MCF 10A (cell line): ENCODE measurements at regions of chr4 and their contacts with region 1.

Region 1: DNA sequence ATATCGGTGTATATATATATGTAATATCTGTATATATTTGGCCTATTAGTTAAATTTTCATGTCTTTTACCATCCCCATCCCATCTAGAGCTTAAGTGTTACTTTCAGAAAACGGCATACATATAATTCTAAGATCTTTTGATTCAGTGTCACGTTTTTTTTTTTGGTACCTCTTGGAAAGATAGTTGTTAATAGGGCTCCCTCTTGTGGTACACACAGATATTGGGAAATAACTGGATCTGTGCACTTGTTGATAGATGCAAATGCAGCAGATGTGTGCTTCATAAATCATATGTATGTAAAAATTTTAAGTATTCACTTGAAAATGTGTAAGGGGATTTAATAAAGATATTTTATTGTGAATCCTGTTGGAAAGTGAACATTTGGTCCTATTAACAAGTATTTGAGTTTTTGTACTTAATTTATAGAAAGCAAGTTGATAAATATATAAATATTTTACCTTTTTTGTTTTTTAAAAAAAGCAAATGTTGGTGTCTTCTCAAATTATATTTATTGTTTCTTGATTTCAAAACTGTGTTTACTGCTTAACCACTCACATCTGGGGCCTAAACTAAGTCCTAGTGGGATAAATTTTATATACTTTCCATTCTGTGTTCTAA is 74.7 kb downstream of the PAQR3 start:
- DNase-seq: peak; percentile 78
- H3K4me3 Mint-ChIP-seq: no peak overlapping the region
- H3K27ac Mint-ChIP-seq: no peak overlapping the region
- H3K4me1 Mint-ChIP-seq: peaks cover 6% of the 10 kb centered on the region
- H3K27me3 Mint-ChIP-seq: no peaks in the 10 kb centered on the region
- CTCF ChIP-seq: peak; percentile 61

Region 2: GRCh38 chr4:77959566-77960338 is 904.8 kb before region 1 on chr4:
- CTCF ChIA-PET with region 1: no interaction called
- POLR2A ChIA-PET with region 1: no interaction called
- intact Hi-C with region 1: loop called (anchors 10 kb)
- DNase-seq: peak; percentile 54
- H3K4me3 Mint-ChIP-seq: no peak overlapping the region
- H3K27ac Mint-ChIP-seq: no peak overlapping the region
- H3K4me1 Mint-ChIP-seq: no peaks in the 10 kb centered on the region
- H3K27me3 Mint-ChIP-seq: no peaks in the 10 kb centered on the region
- CTCF ChIP-seq: peak; percentile 63

Region 3: DNA sequence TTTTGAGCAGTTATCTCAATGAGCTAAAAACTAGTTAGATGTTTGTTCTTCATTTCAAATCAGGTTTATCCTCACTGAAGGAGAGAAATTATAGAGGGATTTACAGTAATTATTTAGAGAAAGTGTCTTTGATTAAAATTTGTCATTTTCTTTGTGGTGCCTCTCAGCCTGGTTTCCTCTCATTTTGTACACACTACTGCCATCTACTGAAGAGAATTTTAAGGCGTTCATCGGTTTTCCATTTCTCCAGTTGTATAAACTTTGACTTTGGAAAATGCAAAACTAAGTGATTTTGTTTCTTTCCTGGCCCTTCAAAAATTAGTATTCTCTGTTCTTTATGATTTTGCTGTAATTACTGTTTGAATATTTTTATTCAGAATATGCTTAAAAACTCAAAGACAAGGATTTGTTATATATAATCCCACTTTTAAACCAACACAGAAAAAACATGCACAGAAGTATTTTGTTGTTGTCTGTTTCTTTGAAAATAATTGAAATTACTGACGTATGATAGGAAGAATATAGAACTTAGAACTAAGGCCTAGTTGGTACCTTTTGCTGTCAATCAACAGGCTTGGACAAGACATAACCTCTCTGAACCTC is 347.4 kb before region 1 on chr4:
- CTCF ChIA-PET with region 1: no interaction called
- POLR2A ChIA-PET with region 1: no interaction called
- intact Hi-C with region 1: loop called (anchors 2 kb)
- DNase-seq: peak; percentile 50
- H3K4me3 Mint-ChIP-seq: no peak overlapping the region
- H3K27ac Mint-ChIP-seq: no peak overlapping the region
- H3K4me1 Mint-ChIP-seq: no peaks in the 10 kb centered on the region
- H3K27me3 Mint-ChIP-seq: no peaks in the 10 kb centered on the region
- CTCF ChIP-seq: peak; percentile 50

Region 4: DNA sequence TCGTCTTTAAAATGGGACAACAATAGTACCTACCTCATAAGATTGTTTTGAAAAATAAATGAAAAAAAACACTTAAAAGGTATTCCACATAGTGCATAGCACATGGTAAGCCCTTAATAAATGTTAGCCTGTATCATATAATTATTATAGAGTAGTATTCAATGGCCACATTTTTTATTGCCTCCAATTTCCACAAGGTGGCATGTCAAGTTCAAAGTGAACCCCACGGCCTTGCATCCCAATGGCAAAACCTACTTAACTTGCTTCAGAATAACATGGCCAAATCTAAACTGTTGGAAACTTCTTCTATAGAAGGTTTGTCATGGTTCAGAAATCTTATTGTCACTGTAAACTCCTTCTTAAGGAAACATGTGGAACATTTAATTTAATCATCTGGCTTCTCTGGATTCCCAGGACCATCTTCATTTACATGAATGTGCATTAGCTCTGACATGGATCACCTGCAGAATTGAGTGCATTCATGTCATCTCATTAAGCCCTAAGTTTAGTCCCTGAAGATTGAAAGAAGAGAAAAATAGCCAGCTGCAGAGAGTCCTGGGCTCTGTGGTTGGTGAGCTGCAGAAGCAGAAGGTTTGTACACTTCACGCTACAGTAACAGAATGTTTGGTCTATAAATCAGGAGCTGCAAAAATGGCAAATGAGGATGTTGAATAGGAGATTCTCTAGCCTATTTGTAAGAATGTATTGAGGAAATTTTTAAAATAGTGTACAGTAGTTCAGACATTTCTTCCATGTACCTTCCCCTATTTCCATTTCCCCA is 251.9 kb before region 1 on chr4:
- CTCF ChIA-PET with region 1: interaction called, 81 read pairs
- POLR2A ChIA-PET with region 1: interaction called, 3 read pairs
- intact Hi-C with region 1: loop called (anchors 1 kb)
- DNase-seq: peak; percentile 68
- H3K4me3 Mint-ChIP-seq: no peak overlapping the region
- H3K27ac Mint-ChIP-seq: no peak overlapping the region
- H3K4me1 Mint-ChIP-seq: no peaks in the 10 kb centered on the region
- H3K27me3 Mint-ChIP-seq: no peaks in the 10 kb centered on the region
- CTCF ChIP-seq: peak; percentile 56

Region 5: DNA sequence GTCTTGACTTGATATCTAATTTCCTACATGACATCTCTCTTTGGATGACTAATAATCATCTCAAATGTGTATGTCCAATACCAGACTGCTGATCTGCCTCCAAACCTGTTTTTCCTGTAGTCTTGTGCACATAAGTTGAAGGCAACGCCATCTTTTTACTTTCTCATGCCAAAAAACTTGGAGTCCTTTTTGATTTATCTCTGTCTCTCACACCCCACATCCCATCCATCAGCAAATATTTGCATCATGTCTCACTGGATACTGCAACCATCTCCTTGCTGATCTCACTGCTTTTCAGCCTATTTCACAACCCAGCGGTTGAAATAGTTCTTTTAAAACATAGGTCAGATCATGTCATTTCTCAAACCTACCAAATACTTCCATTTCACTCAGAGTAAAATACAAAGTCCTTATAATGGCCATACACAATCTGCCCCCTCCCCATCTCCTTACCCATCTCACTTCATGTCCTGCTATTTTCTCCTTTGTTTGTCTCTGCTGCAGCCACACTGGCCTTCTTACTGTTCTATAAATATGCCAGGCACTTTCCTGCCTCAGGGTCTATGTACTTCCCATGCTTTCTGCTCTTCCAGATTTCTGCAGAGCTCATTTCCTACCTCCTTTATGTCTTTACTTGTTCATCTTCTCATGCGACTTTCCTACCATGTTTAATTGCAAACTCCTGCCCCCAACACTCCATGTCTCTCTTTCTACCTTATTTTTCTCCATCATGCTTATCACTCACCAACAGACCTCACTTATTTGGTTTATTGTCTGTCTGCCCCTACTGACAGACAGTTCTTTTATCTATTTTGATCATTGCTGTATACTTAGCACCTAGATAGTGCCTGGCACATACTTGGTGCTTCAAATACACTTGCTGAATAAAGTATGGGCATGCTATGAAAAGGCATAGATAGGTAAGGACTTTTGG is 214.2 kb before region 1 on chr4:
- CTCF ChIA-PET with region 1: interaction called, 37 read pairs
- POLR2A ChIA-PET with region 1: interaction called, 16 read pairs
- intact Hi-C with region 1: no loop called
- DNase-seq: peak; percentile 82
- H3K4me3 Mint-ChIP-seq: no peak overlapping the region
- H3K27ac Mint-ChIP-seq: peak overlapping the region; percentile 26
- H3K4me1 Mint-ChIP-seq: peaks cover 38% of the 10 kb centered on the region
- H3K27me3 Mint-ChIP-seq: no peaks in the 10 kb centered on the region
- CTCF ChIP-seq: no peak